ENCODE measurements at regions of chr19 and their contacts with region 1.

Region 1: GRCh38 chr19:2135474-2136402 is 15.6 kb downstream of the AP3D1 start:
- DNase-seq: no peak
- H3K4me3 ChIP-seq: no peak overlapping the region
- H3K27ac ChIP-seq: no peak overlapping the region
- H3K4me1 ChIP-seq: peaks cover 3% of the 10 kb centered on the region
- H3K27me3 ChIP-seq: no peaks in the 10 kb centered on the region
- CTCF ChIP-seq: no peak
- EP300 ChIP-seq: no peak
- POLR2A ChIP-seq: no peak

Region 2: DNA sequence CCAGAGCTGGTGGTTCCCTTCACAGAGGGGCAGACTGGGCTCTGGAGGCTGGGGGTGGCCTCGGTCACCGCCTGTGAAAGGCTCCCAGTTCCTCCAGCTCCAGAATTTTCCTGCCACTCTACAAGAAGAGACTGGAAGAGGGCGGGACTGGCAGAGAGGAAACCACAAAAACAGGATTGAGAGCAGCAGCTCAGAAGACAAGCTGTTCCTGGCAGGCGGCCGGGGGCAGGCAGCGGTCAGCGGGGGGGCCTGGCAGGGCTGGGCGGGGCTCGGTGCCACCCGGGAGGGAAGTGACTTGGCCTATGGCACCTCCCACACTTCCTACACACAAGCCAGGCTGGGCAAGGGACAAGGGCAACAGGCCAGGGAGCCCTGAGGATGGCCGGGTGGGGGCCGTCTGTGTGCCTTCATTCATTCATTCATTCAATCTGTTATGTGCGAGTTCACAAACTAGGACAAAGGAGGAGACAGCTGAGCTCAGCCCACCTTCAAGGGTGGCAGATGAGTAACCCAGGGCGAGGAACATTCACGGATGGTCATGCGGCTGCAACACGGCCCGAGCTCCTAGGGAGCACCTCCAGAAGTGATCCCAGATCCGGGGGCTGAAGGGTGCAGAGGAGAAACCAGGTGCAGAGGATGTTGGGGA is 103.3 kb before region 1 on chr19:
- intact Hi-C with region 1: no loop called
- DNase-seq: peak; percentile 87 to 95 (median 88)
- H3K4me3 ChIP-seq: no peak overlapping the region
- H3K27ac ChIP-seq: peak overlapping the region; percentile 64 to 77
- H3K4me1 ChIP-seq: peaks cover 16% of the 10 kb centered on the region
- H3K27me3 ChIP-seq: no peaks in the 10 kb centered on the region
- CTCF ChIP-seq: no peak
- EP300 ChIP-seq: peak; percentile 78
- POLR2A ChIP-seq: no peak

Region 3: GRCh38 chr19:2084993-2085720 is 50.6 kb before region 1 on chr19:
- intact Hi-C with region 1: no loop called
- DNase-seq: no peak
- H3K4me3 ChIP-seq: no peak overlapping the region
- H3K27ac ChIP-seq: no peak overlapping the region
- H3K4me1 ChIP-seq: no peaks in the 10 kb centered on the region
- H3K27me3 ChIP-seq: no peaks in the 10 kb centered on the region
- CTCF ChIP-seq: no peak
- EP300 ChIP-seq: no peak
- POLR2A ChIP-seq: no peak

Region 4: DNA sequence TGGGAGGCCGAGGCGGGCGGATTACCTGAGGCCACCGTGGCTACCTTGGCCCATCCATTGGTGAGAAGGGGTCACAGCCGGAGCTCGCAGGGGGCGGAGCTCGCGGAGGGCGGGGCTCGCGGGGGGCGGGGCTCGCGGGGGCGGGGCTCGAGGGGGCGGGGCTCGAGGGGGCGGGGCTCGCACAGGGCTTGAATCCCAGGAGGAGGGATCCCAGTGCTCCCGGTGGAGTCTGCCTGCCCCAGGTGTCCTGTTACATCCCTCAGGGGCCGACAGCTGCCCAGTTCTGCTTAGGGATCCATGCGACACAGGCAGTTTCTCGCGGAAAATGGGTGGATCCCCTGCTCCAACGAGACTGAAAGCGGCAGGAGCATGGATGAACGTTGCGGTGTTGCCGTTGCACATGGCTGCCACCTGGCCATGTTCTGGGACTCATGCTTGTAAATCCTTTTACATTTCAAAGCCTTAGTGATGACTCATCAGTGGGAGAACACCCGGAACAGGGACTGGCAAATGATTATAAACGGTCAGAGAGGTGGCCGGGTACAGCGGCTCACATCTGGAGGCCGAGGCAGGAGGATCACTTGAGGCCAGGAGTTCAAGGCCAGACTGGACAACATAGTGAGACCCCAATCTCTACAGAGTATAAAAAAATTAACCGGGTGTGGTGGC is 249.4 kb after region 1 on chr19:
- intact Hi-C with region 1: loop called in 1 of 4 experiments (anchors 10 kb)
- DNase-seq: peak in 2 of 5 donors; percentile 21 to 42
- H3K4me3 ChIP-seq: no peak overlapping the region
- H3K27ac ChIP-seq: no peak overlapping the region
- H3K4me1 ChIP-seq: no peaks in the 10 kb centered on the region
- H3K27me3 ChIP-seq: no peaks in the 10 kb centered on the region
- CTCF ChIP-seq: no peak
- EP300 ChIP-seq: no peak
- POLR2A ChIP-seq: no peak